Naive thymus-derived CD4-positive, alpha-beta T cell (primary cell): ENCODE measurements at regions of chr19 and their contacts with region 1.

Region 1: DNA sequence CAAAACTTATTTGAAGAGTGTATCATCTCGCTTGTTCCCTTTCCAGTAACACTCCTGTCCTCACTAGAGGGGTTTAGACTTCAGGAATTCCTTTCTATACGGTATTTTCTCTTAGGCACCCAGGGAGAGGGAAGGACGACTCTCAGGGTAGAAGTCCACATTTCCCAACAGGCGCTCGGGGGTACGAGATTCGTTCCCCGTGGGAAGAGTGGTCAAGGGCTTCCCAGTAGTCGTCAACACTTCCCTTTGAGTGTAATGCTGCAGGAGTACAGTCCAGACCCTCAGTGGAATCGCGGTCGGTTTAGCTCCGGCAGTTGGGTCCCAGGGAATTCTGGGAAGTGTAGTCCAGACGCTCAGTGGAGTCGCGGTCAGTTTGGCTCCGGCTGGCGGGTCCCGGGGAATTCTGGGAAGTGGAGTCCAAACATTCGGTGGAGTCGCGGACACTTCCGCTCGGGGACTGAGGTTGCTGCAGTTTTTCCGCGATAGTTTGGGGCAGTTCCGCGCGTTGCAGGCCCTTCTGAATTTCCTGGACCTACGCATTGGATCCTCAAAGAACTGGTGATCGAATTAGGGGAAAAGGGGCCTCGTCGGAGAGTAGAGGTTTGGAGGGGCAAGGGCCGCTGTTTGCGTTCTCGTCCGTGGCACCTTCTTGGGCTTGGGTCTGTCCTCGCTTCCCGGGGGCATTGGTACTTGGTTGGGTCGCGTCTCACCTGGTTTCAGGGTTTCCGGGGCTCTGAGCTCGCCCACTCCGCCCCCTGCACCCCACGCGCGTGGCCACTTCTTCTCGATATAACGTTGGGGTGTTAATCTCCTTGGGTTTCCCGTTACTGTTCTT is at the start of gene ZNF224:
- DNase-seq: peak; percentile 43 to 79 (median 71)
- ATAC-seq: peak; percentile 94
- H3K4me3 ChIP-seq: peak within 1 kb of the TSS; percentile 84
- H3K4me3 Mint-ChIP-seq: peak within 1 kb of the TSS; percentile 82 to 99 (median 91)
- H3K27ac ChIP-seq: peak within 1 kb of the TSS; percentile 72
- H3K27ac Mint-ChIP-seq: peak within 1 kb of the TSS; percentile 58 to 96 (median 87)
- H3K4me1 ChIP-seq: peaks cover 10 to 13% of the 10 kb centered on the region in 2 donors
- H3K4me1 Mint-ChIP-seq: peaks cover 16 to 33% (median 25%) of the 10 kb centered on the region in 7 donors
- H3K27me3 ChIP-seq: no peaks in the 10 kb centered on the region
- H3K27me3 Mint-ChIP-seq: no peaks in the 10 kb centered on the region
- total RNA-seq, gene ZNF224: 35.0 to 82.0 (median 44.2) TPM

Region 2: GRCh38 chr19:43934985-43935708 is 159.0 kb before region 1 on chr19 and contains the start of gene ZNF45:
- CTCF ChIA-PET with region 1: no interaction called
- POLR2A ChIA-PET with region 1: no interaction called
- intact Hi-C with region 1: loop called (anchors 1 to 2 kb)
- DNase-seq: peak; percentile 65 to 89 (median 86)
- ATAC-seq: peak; percentile 98
- H3K4me3 ChIP-seq: peak within 1 kb of the TSS; percentile 84
- H3K4me3 Mint-ChIP-seq: peak within 1 kb of the TSS; percentile 93 to 98 (median 96)
- H3K27ac ChIP-seq: peak within 1 kb of the TSS; percentile 81
- H3K27ac Mint-ChIP-seq: peak within 1 kb of the TSS; percentile 81 to 96 (median 93)
- H3K4me1 ChIP-seq: peaks cover 16 to 17% of the 10 kb centered on the region in 2 donors
- H3K4me1 Mint-ChIP-seq: peaks cover 10 to 46% (median 32%) of the 10 kb centered on the region in 7 donors
- H3K27me3 ChIP-seq: no peaks in the 10 kb centered on the region
- H3K27me3 Mint-ChIP-seq: peaks cover 0 to 7% (median 0%) of the 10 kb centered on the region in 5 donors
- total RNA-seq, gene ZNF45: 8.4 to 28.5 (median 15.3) TPM

Region 3: DNA sequence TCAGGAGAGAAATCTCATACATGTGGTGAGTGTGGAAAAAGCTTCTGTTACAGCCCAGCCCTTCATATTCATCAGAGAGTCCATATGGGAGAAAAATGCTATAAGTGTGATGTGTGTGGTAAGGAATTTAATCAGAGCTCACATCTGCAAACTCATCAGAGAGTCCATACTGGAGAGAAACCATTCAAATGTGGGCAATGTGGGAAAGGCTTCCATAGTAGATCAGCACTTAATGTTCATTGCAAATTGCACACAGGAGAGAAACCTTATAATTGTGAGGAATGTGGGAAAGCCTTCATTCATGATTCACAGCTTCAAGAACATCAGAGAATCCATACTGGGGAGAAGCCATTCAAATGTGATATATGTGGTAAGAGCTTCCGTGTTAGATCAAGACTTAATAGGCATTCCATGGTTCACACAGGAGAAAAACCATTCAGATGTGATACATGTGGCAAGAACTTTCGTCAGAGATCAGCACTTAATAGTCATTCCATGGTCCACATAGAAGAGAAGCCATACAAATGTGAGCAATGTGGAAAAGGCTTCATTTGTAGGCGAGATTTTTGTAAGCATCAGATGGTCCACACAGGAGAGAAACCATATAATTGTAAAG is 128.0 kb before region 1 on chr19:
- CTCF ChIA-PET with region 1: no interaction called
- POLR2A ChIA-PET with region 1: no interaction called
- intact Hi-C with region 1: no loop called
- DNase-seq: no peak
- ATAC-seq: no peak
- H3K4me3 ChIP-seq: no peak overlapping the region
- H3K4me3 Mint-ChIP-seq: no peak overlapping the region
- H3K27ac ChIP-seq: no peak overlapping the region
- H3K27ac Mint-ChIP-seq: no peak overlapping the region
- H3K4me1 ChIP-seq: no peaks in the 10 kb centered on the region
- H3K4me1 Mint-ChIP-seq: no peaks in the 10 kb centered on the region
- H3K27me3 ChIP-seq: no peaks in the 10 kb centered on the region
- H3K27me3 Mint-ChIP-seq: peaks cover 0 to 8% (median 0%) of the 10 kb centered on the region in 5 donors

Region 4: DNA sequence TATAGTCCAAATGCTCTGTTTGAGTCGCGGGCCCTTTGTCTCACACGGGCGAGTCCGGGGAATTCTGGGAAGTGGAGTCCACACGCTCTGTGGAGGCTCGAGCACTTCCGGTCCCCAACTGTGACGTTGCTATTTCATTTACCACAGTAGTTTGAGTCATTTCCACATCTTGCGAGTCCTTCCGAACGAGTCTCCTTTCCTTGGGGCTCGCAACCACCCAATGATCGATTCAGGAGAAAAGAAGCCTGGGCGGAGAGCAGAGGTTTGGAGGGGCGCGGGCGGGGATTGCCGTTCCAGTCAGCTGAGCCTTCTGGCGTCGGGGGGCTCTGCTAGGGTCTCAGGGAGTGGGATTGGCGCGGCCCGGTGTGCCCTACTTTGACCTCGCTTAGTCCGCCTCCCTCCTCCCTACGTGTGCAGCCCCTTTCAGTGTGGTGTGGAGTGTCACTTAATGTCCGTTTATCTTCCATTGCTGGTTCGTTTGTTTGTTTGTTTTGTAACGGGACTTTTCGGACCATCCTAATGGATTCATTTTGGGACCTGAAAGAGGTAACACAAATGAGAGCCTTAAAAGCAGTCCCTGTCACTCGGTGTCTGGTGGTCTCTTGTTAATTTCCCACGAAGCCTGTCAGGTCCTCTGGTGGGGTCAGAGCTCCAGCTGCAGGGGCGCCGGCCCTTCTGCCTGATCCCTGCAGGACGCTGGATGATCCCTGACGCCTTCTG is 68.8 kb before region 1 on chr19 and contains the start of gene ZNF222:
- CTCF ChIA-PET with region 1: no interaction called
- POLR2A ChIA-PET with region 1: no interaction called
- intact Hi-C with region 1: loop called (anchors 1 kb)
- DNase-seq: peak; percentile 41 to 78 (median 66)
- ATAC-seq: peak; percentile 99
- H3K4me3 ChIP-seq: peak within 1 kb of the TSS; percentile 76
- H3K4me3 Mint-ChIP-seq: peak within 1 kb of the TSS; percentile 95 to 100 (median 98)
- H3K27ac ChIP-seq: peak within 1 kb of the TSS; percentile 71
- H3K27ac Mint-ChIP-seq: peak within 1 kb of the TSS; percentile 84 to 98 (median 94)
- H3K4me1 ChIP-seq: peaks cover 5 to 9% of the 10 kb centered on the region in 2 donors
- H3K4me1 Mint-ChIP-seq: peaks cover 12 to 40% (median 31%) of the 10 kb centered on the region in 7 donors
- H3K27me3 ChIP-seq: no peaks in the 10 kb centered on the region
- H3K27me3 Mint-ChIP-seq: peaks cover 0 to 9% (median 3%) of the 10 kb centered on the region in 5 donors
- total RNA-seq, gene ZNF222: 2.9 to 10.1 (median 4.5) TPM

Region 5: DNA sequence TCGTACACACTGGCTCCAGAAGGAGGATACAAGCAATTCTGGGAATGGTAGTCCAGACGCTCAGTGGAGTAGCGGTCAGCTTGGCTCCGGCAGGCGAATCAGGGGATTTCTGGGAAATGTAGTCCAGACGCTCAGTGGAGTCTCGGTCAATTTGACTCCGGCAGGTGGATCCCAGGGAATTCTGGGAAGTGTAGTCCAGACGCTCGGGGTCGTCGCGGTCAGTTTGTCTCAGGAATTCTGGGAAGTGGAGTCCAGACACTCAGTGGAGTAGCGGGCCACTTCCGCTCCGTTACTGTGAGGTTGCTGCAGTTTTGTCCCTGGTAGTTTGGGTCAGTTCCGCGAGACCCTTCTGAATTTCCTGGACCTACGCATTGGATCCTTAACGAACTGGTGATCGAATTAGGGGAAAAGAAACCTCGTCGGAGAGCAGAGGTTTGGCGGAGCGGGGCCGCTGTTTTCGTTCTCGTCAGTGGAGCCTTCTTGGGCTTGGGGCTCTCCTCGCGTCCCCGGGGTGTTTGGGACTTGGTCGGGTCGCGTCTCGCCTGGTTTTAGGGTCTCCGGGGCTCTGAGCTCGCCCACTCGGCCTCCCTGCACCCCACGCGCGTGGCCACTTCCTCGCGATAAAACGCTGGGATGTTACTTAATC is 19.1 kb after region 1 on chr19 and contains the start of gene ZNF225:
- CTCF ChIA-PET with region 1: no interaction called
- POLR2A ChIA-PET with region 1: interaction called, 4 read pairs
- intact Hi-C with region 1: loop called (anchors 1 kb)
- DNase-seq: peak; percentile 41 to 84 (median 76)
- ATAC-seq: peak; percentile 100
- H3K4me3 ChIP-seq: peak within 1 kb of the TSS; percentile 89
- H3K4me3 Mint-ChIP-seq: peak within 1 kb of the TSS; percentile 95 to 100 (median 99)
- H3K27ac ChIP-seq: peak within 1 kb of the TSS; percentile 68
- H3K27ac Mint-ChIP-seq: peak within 1 kb of the TSS; percentile 82 to 97 (median 88)
- H3K4me1 ChIP-seq: peaks cover 3 to 8% of the 10 kb centered on the region in 2 donors
- H3K4me1 Mint-ChIP-seq: peaks cover 16 to 38% (median 31%) of the 10 kb centered on the region in 7 donors
- H3K27me3 ChIP-seq: no peaks in the 10 kb centered on the region
- H3K27me3 Mint-ChIP-seq: no peaks in the 10 kb centered on the region
- total RNA-seq, gene ZNF225: 0.69 to 13.0 (median 5.1) TPM

Region 6: DNA sequence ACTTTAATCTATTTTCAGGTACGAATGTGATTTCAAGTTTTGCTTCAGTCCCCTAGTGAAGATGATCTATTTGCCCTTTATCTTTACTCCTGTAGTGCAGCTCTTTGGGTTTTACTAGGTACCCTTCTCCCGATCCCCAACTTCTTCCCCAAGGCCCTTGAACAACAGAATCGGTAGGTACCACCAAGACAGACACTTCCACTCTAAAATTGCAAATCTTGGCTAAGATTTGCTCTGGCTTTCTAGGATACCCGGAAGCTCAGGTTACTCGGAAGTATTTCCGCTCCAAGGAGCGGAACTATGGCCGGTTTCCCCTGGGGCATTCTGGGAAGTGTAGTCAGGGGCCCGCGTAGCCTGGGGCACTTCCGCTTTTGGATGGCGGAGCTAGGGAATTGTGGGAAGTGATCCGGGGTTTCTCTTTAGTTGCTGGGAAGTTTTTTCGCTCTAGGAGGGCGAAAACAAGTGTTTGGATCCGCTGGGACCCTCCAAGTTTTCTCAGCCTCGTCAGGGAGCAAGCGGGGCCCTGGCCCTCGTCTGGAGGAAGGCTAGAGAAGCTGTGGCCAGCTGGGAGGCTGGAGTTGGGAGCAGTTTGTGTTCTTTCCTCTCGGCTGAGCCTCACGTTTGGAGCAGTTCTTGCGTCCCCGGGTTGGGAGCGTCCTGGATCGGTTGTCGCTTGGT is 113.1 kb after region 1 on chr19:
- CTCF ChIA-PET with region 1: no interaction called
- POLR2A ChIA-PET with region 1: interaction called, 3 read pairs
- intact Hi-C with region 1: loop called (anchors 1 kb)
- DNase-seq: peak; percentile 25 to 78 (median 70)
- ATAC-seq: peak; percentile 97
- H3K4me3 ChIP-seq: peak overlapping the region; percentile 79
- H3K4me3 Mint-ChIP-seq: peak overlapping the region; percentile 81 to 95 (median 87)
- H3K27ac ChIP-seq: peak overlapping the region; percentile 75
- H3K27ac Mint-ChIP-seq: peak overlapping the region; percentile 79 to 93 (median 84)
- H3K4me1 ChIP-seq: peaks cover 0 to 11% of the 10 kb centered on the region in 2 donors
- H3K4me1 Mint-ChIP-seq: peaks cover 7 to 15% (median 11%) of the 10 kb centered on the region in 7 donors
- H3K27me3 ChIP-seq: no peaks in the 10 kb centered on the region
- H3K27me3 Mint-ChIP-seq: peaks cover 0 to 22% (median 16%) of the 10 kb centered on the region in 5 donors

Region 7: GRCh38 chr19:44401139-44402115 is 307.3 kb after region 1 on chr19 and contains the start of gene ZNF285:
- CTCF ChIA-PET with region 1: no interaction called
- POLR2A ChIA-PET with region 1: no interaction called
- intact Hi-C with region 1: no loop called
- DNase-seq: peak; percentile 48 to 79 (median 63)
- ATAC-seq: peak; percentile 92
- H3K4me3 ChIP-seq: peak within 1 kb of the TSS; percentile 57
- H3K4me3 Mint-ChIP-seq: peak within 1 kb of the TSS; percentile 90 to 100 (median 92)
- H3K27ac ChIP-seq: no peak within 1 kb of the TSS
- H3K27ac Mint-ChIP-seq: peak within 1 kb of the TSS; percentile 14 to 94 (median 68)
- H3K4me1 ChIP-seq: no peaks in the 10 kb centered on the region
- H3K4me1 Mint-ChIP-seq: peaks cover 4 to 14% (median 6%) of the 10 kb centered on the region in 7 donors
- H3K27me3 ChIP-seq: no peaks in the 10 kb centered on the region
- H3K27me3 Mint-ChIP-seq: peaks cover 0 to 20% (median 8%) of the 10 kb centered on the region in 5 donors
- total RNA-seq, gene ZNF285: 0.10 to 4.8 (median 0.90) TPM

Region 8: DNA sequence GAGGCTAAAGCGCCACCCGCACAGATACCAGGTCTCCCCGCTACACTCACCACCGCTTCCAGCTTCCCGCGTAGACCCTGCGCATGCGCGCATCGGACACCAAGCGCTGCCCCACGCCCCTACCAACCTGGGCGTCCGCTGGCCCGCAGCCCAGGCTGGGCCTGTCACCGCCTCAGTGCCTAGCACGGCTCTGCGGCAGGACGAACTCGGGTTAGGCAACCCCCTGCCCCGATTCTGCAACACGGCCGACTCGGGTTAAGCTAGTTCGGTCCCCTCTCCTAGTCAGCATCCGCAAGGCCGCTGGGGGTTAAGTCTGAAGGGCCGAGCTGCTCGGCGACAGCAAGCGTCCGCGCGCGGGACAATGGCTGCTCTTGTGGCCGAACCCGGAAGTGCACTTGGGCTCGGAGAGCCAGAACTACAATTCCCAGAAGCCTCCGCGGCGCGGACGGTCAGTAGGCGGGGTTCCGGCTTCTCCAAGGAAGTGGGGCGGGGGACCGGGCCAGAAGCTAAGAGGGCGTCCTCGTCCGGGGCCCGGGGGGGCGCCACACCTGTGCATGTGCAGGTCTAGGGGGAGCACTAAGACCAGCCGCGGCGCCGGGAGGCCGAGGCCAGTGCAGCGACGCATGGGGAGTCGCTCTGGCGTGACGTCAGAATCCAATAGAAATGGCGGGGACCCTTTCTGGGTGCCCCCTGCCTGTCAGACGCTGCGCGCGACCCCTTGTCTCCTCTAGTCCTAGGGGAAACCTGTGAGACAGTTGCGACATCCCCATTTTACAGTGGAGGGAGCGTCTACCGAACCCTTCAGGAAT is 406.2 kb after region 1 on chr19 and contains the start of gene ZNF180:
- CTCF ChIA-PET with region 1: no interaction called
- POLR2A ChIA-PET with region 1: interaction called, 3 read pairs
- intact Hi-C with region 1: loop called in 1 of 2 experiments (anchors 2 kb)
- DNase-seq: peak; percentile 89 to 96 (median 93)
- ATAC-seq: peak; percentile 96
- H3K4me3 ChIP-seq: peak within 1 kb of the TSS; percentile 100
- H3K4me3 Mint-ChIP-seq: peak within 1 kb of the TSS; percentile 91 to 98 (median 96)
- H3K27ac ChIP-seq: peak within 1 kb of the TSS; percentile 84
- H3K27ac Mint-ChIP-seq: peak within 1 kb of the TSS; percentile 82 to 94 (median 92)
- H3K4me1 ChIP-seq: peaks cover 13 to 19% of the 10 kb centered on the region in 2 donors
- H3K4me1 Mint-ChIP-seq: peaks cover 29 to 45% (median 34%) of the 10 kb centered on the region in 7 donors
- H3K27me3 ChIP-seq: peaks cover 0 to 2% of the 10 kb centered on the region in 2 donors
- H3K27me3 Mint-ChIP-seq: peaks cover 7 to 18% (median 13%) of the 10 kb centered on the region in 5 donors
- total RNA-seq, gene ZNF180: 7.5 to 17.7 (median 10.6) TPM